ENCODE measurements at regions of chr3 and their contacts with region 1.

Region 1: DNA sequence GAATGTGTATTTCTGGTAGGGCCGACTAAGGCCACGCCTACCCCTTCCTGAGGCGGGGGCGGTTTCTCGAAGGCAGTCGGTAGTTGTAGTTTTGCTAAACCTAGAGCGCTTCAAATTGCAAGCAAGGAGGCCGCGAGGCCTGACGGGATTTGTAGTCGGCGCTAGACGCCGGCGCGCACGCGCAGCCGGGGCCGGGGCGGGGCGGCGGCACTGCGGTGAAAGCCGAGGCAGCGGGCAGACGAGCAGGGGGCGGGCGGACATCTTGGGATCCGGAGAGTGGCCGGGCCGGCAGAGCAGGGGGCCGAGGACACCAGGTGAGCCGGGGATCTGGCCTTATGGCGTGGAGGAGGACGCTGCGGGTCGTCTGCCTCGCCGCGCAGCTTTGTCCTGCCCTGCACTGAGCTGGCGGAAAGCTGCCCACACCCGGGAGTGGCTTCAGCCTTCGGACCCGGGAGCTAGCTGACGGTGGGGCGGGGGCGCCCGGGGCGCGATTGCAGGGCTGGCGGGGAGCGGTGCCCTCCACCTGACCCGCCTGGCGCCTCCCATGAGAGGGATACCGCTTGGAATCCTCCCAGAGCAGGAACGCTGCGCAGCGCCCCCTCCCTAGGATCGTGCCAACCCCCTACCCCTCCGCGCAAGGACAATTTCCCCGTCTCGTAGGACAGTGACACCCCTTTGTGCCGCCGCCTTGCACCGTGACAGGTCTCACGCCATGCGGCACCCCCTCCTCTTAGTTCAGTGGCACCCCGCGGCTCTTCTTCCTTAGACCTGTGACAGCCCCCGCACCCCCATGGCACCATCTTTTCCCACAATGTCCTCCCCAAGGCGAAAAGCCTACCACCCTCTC is at the start of gene AP2M1:
- DNase-seq: peak; percentile 98
- ATAC-seq: peak; percentile 83
- H3K4me3 ChIP-seq: peak within 1 kb of the TSS; percentile 96
- H3K27ac ChIP-seq: peak within 1 kb of the TSS; percentile 92
- H3K4me1 ChIP-seq: peaks cover 10 to 30% of the 10 kb centered on the region in 2 experiments
- H3K27me3 ChIP-seq: no peaks in the 10 kb centered on the region
- CTCF ChIP-seq: no peak
- POLR2A ChIP-seq: peak; percentile 37
- RAD21 ChIP-seq: no peak
- total RNA-seq, gene AP2M1: 353 TPM

Region 2: GRCh38 chr3:183991403-183991802 is 183.5 kb before region 1 on chr3:
- CTCF ChIA-PET with region 1: no interaction called
- POLR2A ChIA-PET with region 1: no interaction called
- RAD21 ChIA-PET with region 1: no interaction called
- intact Hi-C with region 1: no loop called
- DNase-seq: no peak
- ATAC-seq: no peak
- H3K4me3 ChIP-seq: no peak overlapping the region
- H3K27ac ChIP-seq: no peak overlapping the region
- H3K4me1 ChIP-seq: no peaks in the 10 kb centered on the region
- H3K27me3 ChIP-seq: no peaks in the 10 kb centered on the region
- CTCF ChIP-seq: no peak
- POLR2A ChIP-seq: no peak
- RAD21 ChIP-seq: no peak

Region 3: DNA sequence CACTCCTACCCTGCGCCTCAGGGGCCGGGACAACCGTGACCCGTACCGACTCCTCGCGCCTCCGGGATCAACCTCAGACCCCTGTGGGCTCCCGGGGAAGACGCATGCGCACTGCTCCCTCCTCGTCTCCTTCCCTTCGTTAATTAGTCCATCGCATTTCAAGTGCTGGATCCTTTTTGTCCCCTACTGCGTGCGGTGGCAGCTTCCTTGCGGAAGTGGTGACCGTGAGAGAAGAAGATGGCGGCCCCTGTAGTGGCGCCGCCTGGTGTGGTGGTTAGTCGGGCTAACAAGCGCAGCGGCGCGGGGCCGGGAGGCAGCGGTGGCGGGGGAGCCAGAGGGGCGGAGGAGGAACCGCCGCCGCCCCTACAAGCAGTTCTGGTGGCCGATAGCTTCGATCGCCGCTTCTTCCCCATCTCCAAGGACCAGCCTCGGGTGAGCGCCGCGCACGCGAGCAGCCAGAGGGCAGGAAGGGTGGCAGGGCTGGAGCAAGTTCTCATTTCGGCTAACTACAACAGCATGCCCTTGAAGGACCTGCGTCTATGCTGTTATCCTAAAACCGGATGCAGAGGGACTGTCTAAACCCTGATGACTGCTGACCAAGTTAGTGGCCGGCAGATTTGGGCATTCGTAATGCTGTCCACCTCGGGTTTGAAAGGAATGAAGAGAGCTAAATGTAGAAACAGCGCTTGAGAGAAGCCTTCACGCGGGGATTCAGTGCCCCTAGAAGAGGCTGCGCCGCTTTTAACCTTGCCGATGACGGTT is 39.5 kb before region 1 on chr3 and contains the start of gene EIF2B5:
- CTCF ChIA-PET with region 1: no interaction called
- POLR2A ChIA-PET with region 1: interaction called, 3 read pairs
- RAD21 ChIA-PET with region 1: no interaction called
- intact Hi-C with region 1: loop called (anchors 2 kb)
- DNase-seq: peak; percentile 89
- ATAC-seq: peak; percentile 79
- H3K4me3 ChIP-seq: peak within 1 kb of the TSS; percentile 89 to 91
- H3K27ac ChIP-seq: peak within 1 kb of the TSS; percentile 71
- H3K4me1 ChIP-seq: peaks cover 9 to 31% of the 10 kb centered on the region in 2 experiments; a peak in 3 of 4 replicates
- H3K27me3 ChIP-seq: no peaks in the 10 kb centered on the region
- CTCF ChIP-seq: peak in 1 of 3 experiments; percentile 41; a peak in 1 of 6 replicates
- POLR2A ChIP-seq: peak; percentile 69
- RAD21 ChIP-seq: no peak
- total RNA-seq, gene EIF2B5: 50.3 TPM

Region 4: GRCh38 chr3:184185461-184186308 is 10.8 kb after region 1 on chr3 and contains the start of gene ABCF3:
- CTCF ChIA-PET with region 1: interaction called, 5 read pairs
- POLR2A ChIA-PET with region 1: interaction called, 12 read pairs
- RAD21 ChIA-PET with region 1: no interaction called
- intact Hi-C with region 1: no loop called
- DNase-seq: peak; percentile 97
- ATAC-seq: peak; percentile 96
- H3K4me3 ChIP-seq: peak within 1 kb of the TSS; percentile 98 to 100
- H3K27ac ChIP-seq: peak within 1 kb of the TSS; percentile 88
- H3K4me1 ChIP-seq: peaks cover 6 to 20% of the 10 kb centered on the region in 2 experiments
- H3K27me3 ChIP-seq: no peaks in the 10 kb centered on the region
- CTCF ChIP-seq: no peak
- POLR2A ChIP-seq: peak; percentile 58
- RAD21 ChIP-seq: no peak
- total RNA-seq, gene ABCF3: 74.6 TPM

Region 5: DNA sequence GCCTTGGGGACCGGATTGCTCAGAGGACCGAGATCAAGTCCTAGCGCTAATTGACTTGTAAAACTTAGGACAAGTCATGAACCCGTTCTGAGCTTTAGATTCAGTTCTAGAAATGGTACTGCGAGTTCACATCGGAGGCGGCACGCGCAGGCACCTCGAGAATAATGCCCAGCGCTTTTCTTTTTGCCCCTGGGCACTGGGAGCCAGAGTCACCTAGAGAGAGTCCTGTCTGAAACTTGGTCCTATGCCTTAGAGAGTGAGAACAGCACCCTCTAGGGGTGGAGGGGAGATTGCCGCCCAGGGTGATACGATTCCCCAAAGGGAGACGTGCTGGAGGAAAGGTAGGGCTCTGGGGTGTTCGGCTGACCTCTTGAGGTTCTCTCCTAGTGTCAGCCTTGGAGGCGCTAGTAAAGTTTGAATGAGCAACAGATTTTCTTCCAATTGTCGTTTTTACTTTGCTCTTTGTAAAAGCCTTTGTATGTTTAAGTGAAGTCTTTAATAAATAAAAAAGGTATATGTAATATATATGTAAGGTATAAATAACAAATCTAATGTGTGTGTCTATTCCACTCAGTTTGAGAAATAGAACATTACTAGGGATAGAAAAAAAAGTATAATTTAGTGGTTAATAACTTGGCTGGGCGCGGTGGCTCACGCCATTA is 75.4 kb after region 1 on chr3:
- CTCF ChIA-PET with region 1: interaction called, 4 read pairs
- POLR2A ChIA-PET with region 1: interaction called, 3 read pairs
- RAD21 ChIA-PET with region 1: no interaction called
- intact Hi-C with region 1: loop called (anchors 2 kb)
- DNase-seq: peak; percentile 91
- ATAC-seq: peak; percentile 76
- H3K4me3 ChIP-seq: peak overlapping the region; percentile 89 to 100
- H3K27ac ChIP-seq: peak overlapping the region; percentile 82
- H3K4me1 ChIP-seq: peaks cover 3 to 9% of the 10 kb centered on the region in 2 experiments; a peak in 2 of 4 replicates
- H3K27me3 ChIP-seq: no peaks in the 10 kb centered on the region
- CTCF ChIP-seq: peak in 2 of 3 experiments; percentile 96 to 98; a peak in 4 of 6 replicates
- POLR2A ChIP-seq: no peak
- RAD21 ChIP-seq: no peak